MCF 10A (cell line): ENCODE measurements at regions of chr15 and their contacts with region 1.

Region 1: DNA sequence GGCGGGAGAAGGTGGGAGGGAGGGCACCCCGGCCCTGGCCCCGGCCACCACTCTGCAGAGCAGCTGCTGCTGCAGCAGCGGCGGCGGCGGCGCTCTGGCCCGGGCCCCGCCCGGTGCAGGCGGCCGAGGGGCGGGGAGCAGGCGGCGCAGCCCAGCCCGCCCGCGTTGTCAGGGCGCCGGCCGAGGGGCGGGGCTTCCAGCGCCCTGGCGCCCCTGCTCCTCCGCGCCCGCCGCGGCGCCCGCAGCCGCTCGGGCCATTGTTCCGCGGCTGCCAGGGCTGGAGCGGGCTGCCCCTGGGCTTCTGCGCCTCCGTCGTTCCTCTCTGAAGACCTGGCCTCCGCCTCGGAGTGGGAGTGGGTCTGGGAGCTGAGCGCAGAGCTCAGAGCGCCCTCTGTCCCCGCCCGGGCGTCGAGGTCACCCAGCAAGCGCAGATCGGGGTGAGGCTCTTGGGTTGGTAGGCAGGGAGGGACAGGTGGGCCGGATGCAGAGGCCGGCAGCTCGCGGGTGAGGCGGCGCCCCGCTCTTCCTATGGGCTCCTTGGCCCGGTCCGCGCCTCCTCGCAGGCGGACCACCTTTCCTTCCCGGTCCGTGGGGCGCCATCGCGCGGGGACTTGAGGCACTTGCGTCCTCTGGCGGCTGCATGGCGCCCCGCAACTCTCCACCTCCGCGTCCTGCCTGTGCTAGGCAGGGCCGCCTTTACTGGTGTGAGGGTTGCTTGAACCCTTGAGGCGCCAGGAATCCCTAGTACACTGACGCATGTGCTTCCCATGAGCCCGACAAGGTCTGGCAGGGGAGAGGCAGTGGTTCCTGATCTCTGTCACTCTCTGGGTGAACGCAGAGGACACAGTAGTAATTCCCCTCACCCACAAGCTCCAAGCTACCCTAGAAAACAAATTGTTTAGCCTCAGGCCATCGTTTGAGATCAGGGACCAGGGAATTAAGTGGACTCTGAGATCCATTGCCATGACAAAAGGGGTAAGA is at the start of gene LPCAT4:
- DNase-seq: peak; percentile 84
- H3K4me3 Mint-ChIP-seq: peak within 1 kb of the TSS; percentile 79
- H3K27ac Mint-ChIP-seq: peak within 1 kb of the TSS; percentile 70
- H3K4me1 Mint-ChIP-seq: peaks cover 20% of the 10 kb centered on the region
- H3K27me3 Mint-ChIP-seq: no peaks in the 10 kb centered on the region
- CTCF ChIP-seq: peak; percentile 91
- total RNA-seq, gene LPCAT4: 17.0 and 17.4 TPM in 2 replicates

Region 2: DNA sequence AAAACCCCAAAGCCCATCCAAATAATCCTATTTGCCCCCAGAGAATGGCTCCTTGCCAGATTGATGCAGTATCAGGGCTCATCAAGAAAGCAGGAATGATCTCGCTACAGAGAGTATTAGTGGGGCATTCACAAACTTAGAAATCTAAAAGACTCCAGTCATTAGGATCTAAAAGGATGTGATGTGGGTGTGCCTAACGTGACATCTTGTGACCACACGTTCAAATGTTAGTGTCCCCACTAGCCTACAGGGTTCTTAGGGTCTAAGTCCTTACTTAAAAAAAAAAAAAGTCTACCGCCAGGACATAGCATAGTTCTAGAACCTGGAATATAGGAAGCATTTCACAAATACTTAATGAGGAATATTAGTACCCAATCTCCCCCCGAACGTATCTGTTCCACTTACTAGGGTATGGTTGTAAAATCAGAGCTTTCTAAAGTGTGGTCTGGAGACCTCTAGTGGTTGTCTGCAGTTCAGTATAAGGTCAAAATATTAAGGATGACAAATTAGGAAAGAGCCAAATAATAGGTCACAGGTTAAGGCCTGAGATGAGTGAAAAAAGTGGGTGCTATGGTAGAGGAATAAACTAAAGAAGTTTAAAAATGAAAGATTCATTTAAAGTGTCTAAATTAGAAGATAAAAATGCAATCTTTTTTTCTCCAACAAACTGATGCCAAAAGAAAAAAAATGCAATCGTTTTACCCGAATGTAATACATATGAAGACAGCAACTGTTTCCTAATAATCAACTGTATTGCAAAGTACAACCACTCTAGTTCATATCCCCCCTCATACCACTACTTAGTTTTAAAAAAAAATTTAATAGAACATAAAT is 403.3 kb before region 1 on chr15:
- CTCF ChIA-PET with region 1: no interaction called
- POLR2A ChIA-PET with region 1: no interaction called
- intact Hi-C with region 1: no loop called
- DNase-seq: peak; percentile 48
- H3K4me3 Mint-ChIP-seq: no peak overlapping the region
- H3K27ac Mint-ChIP-seq: no peak overlapping the region
- H3K4me1 Mint-ChIP-seq: no peaks in the 10 kb centered on the region
- H3K27me3 Mint-ChIP-seq: no peaks in the 10 kb centered on the region
- CTCF ChIP-seq: peak; percentile 73

Region 3: GRCh38 chr15:34109797-34110663 is 257.4 kb before region 1 on chr15:
- CTCF ChIA-PET with region 1: interaction called, 15 read pairs
- POLR2A ChIA-PET with region 1: interaction called, 3 read pairs
- intact Hi-C with region 1: loop called (anchors 1 kb)
- DNase-seq: peak; percentile 59
- H3K4me3 Mint-ChIP-seq: no peak overlapping the region
- H3K27ac Mint-ChIP-seq: no peak overlapping the region
- H3K4me1 Mint-ChIP-seq: no peaks in the 10 kb centered on the region
- H3K27me3 Mint-ChIP-seq: no peaks in the 10 kb centered on the region
- CTCF ChIP-seq: peak; percentile 64

Region 4: GRCh38 chr15:34241372-34242330 is 125.7 kb before region 1 on chr15:
- CTCF ChIA-PET with region 1: interaction called, 41 read pairs
- POLR2A ChIA-PET with region 1: interaction called, 31 read pairs
- intact Hi-C with region 1: loop called (anchors 1 kb)
- DNase-seq: peak; percentile 64
- H3K4me3 Mint-ChIP-seq: no peak overlapping the region
- H3K27ac Mint-ChIP-seq: no peak overlapping the region
- H3K4me1 Mint-ChIP-seq: peaks cover 13% of the 10 kb centered on the region
- H3K27me3 Mint-ChIP-seq: no peaks in the 10 kb centered on the region
- CTCF ChIP-seq: peak; percentile 68

Region 5: GRCh38 chr15:34337557-34338306 is 29.7 kb before region 1 on chr15 and contains the start of gene SLC12A6:
- CTCF ChIA-PET with region 1: interaction called, 24 read pairs
- POLR2A ChIA-PET with region 1: interaction called, 44 read pairs
- intact Hi-C with region 1: loop called (anchors 1 kb)
- DNase-seq: peak; percentile 88
- H3K4me3 Mint-ChIP-seq: peak within 1 kb of the TSS; percentile 83
- H3K27ac Mint-ChIP-seq: peak within 1 kb of the TSS; percentile 49
- H3K4me1 Mint-ChIP-seq: peaks cover 32% of the 10 kb centered on the region
- H3K27me3 Mint-ChIP-seq: no peaks in the 10 kb centered on the region
- CTCF ChIP-seq: no peak
- total RNA-seq, gene SLC12A6: 11.7 and 15.3 TPM in 2 replicates